ENCODE measurements at regions of chr22 and their contacts with region 1.

Region 1: GRCh38 chr22:45096256-45096907 is 67.3 kb upstream of the NUP50 start:
- DNase-seq: peak; percentile 60 to 64
- ATAC-seq: peak; percentile 82 to 89
- H3K4me3 ChIP-seq: no peak overlapping the region
- H3K27ac ChIP-seq: no peak overlapping the region
- H3K4me1 ChIP-seq: no peaks in the 10 kb centered on the region
- CTCF ChIP-seq: peak; percentile 65
- EP300 ChIP-seq: no peak
- POLR2A ChIP-seq: no peak
- RAD21 ChIP-seq: peak; percentile 64 to 76

Region 2: GRCh38 chr22:44819971-44820631 is 276.3 kb before region 1 on chr22:
- CTCF ChIA-PET with region 1: interaction called, 22 read pairs
- POLR2A ChIA-PET with region 1: no interaction called
- DNase-seq: no peak
- ATAC-seq: peak; percentile 35 to 54; a peak in 3 of 6 replicates
- H3K4me3 ChIP-seq: no peak overlapping the region
- H3K27ac ChIP-seq: no peak overlapping the region
- H3K4me1 ChIP-seq: no peaks in the 10 kb centered on the region
- CTCF ChIP-seq: no peak
- EP300 ChIP-seq: no peak
- POLR2A ChIP-seq: no peak
- RAD21 ChIP-seq: no peak

Region 3: DNA sequence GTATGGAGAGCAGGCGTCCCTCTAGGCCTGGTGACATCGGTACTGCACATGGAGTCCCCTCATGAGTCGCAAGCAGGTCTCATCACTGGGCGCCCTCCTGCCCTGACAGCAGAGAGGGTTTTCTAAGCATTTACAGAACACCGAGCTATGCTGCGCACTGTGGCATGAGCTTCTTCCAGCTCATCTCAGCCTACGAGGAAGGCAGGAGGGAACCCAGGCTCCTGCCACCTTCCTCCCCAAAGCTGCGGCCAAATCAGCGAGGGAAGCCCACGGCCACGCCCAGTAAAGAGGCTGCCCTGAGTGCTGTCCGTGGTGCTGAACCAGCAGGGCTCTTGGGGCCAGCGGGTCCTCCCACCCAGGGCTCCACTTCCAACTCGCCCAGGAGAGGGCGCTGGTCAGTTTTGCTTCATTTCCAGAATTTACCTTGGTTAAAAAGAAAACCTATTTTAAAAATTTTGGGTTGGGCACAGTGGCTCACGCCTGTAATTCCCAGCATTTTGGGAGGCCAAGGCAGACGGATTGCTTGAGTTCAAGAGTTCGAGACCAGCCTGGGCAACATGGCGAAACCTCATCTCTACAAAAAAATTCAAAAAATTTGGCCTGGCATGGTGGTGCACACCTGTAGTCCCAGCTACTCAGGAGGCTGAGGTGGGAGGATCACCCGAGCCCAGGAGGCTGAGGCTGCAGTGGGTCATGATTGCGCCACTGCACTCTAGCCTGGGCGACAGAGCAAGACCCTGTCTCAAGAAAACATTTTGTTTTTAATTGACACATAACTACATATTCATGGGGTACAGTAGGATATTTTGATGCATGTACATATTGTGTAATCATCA is 120.7 kb before region 1 on chr22:
- CTCF ChIA-PET with region 1: interaction called, 10 read pairs
- POLR2A ChIA-PET with region 1: no interaction called
- DNase-seq: peak; percentile 54 to 74
- ATAC-seq: peak; percentile 87 to 98
- H3K4me3 ChIP-seq: no peak overlapping the region
- H3K27ac ChIP-seq: no peak overlapping the region
- H3K4me1 ChIP-seq: no peaks in the 10 kb centered on the region
- CTCF ChIP-seq: peak; percentile 51
- EP300 ChIP-seq: no peak
- POLR2A ChIP-seq: no peak
- RAD21 ChIP-seq: peak; percentile 57 to 59

Region 4: GRCh38 chr22:45069925-45070324 is 26.5 kb before region 1 on chr22:
- CTCF ChIA-PET with region 1: interaction called, 11 read pairs
- POLR2A ChIA-PET with region 1: no interaction called
- DNase-seq: no peak
- ATAC-seq: no peak
- H3K4me3 ChIP-seq: no peak overlapping the region
- H3K27ac ChIP-seq: no peak overlapping the region
- H3K4me1 ChIP-seq: peaks cover 14% of the 10 kb centered on the region
- CTCF ChIP-seq: no peak
- EP300 ChIP-seq: no peak
- POLR2A ChIP-seq: no peak
- RAD21 ChIP-seq: no peak

Region 5: GRCh38 chr22:45082795-45083194 is 13.6 kb before region 1 on chr22:
- CTCF ChIA-PET with region 1: interaction called, 17 read pairs
- POLR2A ChIA-PET with region 1: no interaction called
- DNase-seq: peak in 1 of 2 experiments; percentile 37
- ATAC-seq: peak; percentile 32 to 69; a peak in 3 of 6 replicates
- H3K4me3 ChIP-seq: no peak overlapping the region
- H3K27ac ChIP-seq: no peak overlapping the region
- H3K4me1 ChIP-seq: peaks cover 6% of the 10 kb centered on the region; the same call in 2 of the 3 replicates
- CTCF ChIP-seq: peak; percentile 49
- EP300 ChIP-seq: no peak
- POLR2A ChIP-seq: no peak
- RAD21 ChIP-seq: peak; percentile 49 to 65; a peak in 4 of 5 replicates

Region 6: DNA sequence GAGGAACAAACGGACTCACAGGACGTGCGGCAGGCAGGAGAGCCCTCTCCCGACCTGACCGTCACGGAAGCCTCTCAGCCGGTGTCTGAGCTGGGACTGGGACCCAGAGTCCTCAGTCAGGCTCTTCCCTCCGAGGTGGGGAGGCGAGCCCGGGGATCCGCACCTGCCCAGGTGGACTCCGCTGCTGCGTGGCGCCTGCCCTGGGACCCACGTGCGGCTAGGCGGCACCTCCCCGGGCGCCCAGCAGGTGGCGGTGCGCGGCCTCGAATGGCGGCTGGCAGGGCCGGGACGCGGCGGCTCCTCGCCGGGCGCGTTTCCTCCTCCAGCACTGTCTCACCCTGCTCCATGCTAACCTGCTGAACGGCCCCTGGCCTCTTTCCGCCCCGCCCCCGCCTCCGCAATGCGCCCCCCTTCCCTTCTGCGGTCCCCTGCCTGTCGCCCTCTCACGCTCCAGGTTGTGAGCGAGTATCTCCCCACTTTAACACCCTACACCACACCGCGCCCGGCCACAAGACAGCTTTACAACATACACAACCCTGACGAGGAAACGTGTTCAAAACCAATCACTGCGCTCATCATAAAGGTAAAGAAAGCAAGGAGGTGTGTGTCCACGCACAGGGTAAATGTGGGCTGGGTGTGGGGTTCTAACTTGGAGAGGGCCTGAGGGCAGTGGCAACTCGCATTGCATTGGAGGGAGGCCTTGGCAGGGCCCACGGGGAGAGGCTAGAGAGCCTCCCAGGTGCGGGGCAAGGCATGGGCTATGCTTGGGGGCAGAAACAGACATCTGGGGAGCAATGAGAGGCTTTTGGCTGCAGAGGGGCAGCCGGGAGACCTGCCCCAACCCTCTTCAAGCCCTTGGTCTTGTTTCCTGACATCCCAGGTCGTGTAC is 549.4 kb after region 1 on chr22:
- CTCF ChIA-PET with region 1: no interaction called
- POLR2A ChIA-PET with region 1: no interaction called
- DNase-seq: peak; percentile 53 to 77
- ATAC-seq: peak; percentile 94 to 96
- H3K4me3 ChIP-seq: no peak overlapping the region
- H3K27ac ChIP-seq: peak overlapping the region; percentile 99 to 100
- H3K4me1 ChIP-seq: peaks cover 40% of the 10 kb centered on the region
- CTCF ChIP-seq: peak; percentile 82
- EP300 ChIP-seq: no peak
- POLR2A ChIP-seq: no peak
- RAD21 ChIP-seq: peak; percentile 82 to 97

Measured in A549 (cell line).